ENCODE measurements at regions of chr1 and their contacts with region 1.

Region 1: DNA sequence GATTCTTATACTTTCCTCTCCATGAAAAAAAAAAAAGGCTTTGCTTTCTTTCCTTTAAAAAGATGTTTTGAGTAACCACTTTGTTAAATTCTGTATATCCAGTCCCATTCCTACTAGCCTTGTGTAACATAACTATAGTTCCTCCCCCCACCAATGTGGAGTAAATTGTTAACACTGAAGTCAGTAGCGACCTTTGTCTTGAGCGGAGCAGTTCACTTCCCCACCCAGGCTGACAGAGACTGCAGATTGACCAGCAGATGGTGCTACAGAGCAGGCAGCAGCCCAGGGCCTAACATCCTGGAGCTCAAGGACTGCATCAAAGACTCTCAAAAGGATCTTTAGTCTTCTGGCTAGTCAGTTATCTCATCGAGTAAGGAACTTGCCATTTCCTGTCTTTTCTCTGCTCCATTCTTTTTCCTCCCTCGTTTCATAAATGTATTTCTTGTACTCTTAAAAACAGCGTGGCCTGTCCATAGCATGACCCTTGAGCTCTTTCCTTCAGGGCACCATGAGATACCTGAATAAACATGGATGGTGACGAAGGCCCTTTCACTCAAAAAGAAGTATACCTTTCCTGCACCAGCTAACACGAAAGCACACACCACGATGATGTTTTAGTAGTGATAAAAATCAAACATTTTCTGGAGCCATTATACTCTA is 503.5 kb upstream of the PKN2 start:
- DNase-seq: peak; percentile 61
- H3K4me3 Mint-ChIP-seq: no peak overlapping the region
- H3K27ac Mint-ChIP-seq: no peak overlapping the region
- H3K4me1 Mint-ChIP-seq: no peaks in the 10 kb centered on the region
- H3K27me3 Mint-ChIP-seq: peaks cover 5% of the 10 kb centered on the region

Region 2: GRCh38 chr1:88191917-88192316 is 11.3 kb after region 1 on chr1:
- CTCF ChIA-PET with region 1: interaction called, 11 read pairs
- POLR2A ChIA-PET with region 1: no interaction called
- DNase-seq: no peak
- H3K4me3 Mint-ChIP-seq: no peak overlapping the region
- H3K27ac Mint-ChIP-seq: no peak overlapping the region
- H3K4me1 Mint-ChIP-seq: peaks cover 7% of the 10 kb centered on the region
- H3K27me3 Mint-ChIP-seq: peaks cover 4% of the 10 kb centered on the region